ENCODE measurements at regions of chr9 and their contacts with region 1.

Region 1: DNA sequence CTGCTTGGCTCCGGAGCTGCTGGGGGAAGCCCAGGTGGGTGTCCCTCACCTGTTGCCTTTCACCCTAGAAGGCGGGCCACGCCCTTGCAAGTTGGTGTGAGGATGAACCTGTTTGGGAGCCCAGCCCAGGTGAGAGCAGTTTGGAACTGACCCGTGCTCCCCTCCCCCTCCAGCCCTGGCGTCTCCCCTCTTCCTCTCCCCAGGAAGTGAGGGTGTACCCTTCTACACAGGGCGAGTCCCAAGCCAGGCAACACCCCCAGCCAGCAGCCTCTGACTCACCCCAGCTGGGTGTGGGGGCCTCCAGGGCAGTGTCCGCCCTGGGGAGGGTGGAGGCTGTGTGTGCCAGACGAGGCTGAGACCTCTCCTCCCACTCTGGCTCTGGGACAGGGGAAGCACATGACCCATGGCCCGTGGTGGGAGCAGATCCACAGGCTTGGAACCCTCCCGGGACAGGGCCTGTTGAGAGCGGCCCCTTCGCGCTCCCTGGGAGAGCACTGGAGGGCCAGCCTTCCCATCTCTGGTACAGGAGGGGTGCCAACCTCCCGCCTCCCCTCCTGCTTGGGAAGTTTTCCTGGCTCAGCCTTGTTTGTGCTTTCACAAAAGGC is 10.5 kb downstream of the LRRC8A start:
- DNase-seq: peak; percentile 89
- ATAC-seq: peak; percentile 91
- H3K4me3 ChIP-seq: peak overlapping the region; percentile 31; the same call in 1 of the 2 replicates
- H3K27ac ChIP-seq: peak overlapping the region; percentile 76
- H3K4me1 ChIP-seq: peaks cover 29% of the 10 kb centered on the region
- H3K27me3 ChIP-seq: no peaks in the 10 kb centered on the region
- CTCF ChIP-seq: no peak

Region 2: DNA sequence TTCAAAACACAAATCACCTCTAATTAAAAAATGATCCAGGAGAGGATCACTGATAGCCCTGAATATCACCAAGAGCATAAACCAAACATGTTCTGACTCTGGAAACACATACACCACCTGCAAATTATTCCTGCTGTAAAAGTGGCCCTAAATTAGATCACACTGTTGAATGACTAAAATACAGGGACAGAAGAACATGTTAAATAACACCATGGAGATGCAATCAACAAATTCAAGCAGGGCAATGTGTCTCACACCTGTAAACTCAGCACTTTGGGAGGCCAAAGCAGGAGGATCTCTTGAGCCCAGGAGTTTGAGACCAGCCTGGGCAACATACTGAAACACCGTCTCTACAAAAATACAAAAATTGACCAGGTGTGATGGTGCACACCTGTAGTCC is 44.6 kb before region 1 on chr9:
- CTCF ChIA-PET with region 1: no interaction called
- POLR2A ChIA-PET with region 1: no interaction called
- intact Hi-C with region 1: loop called (anchors 2 kb)
- DNase-seq: no peak
- ATAC-seq: no peak
- H3K4me3 ChIP-seq: no peak overlapping the region
- H3K27ac ChIP-seq: no peak overlapping the region
- H3K4me1 ChIP-seq: peaks cover under 1% of the 10 kb centered on the region; the same call in 1 of the 2 replicates
- H3K27me3 ChIP-seq: no peaks in the 10 kb centered on the region
- CTCF ChIP-seq: no peak

Measured in PC-3 (cell line).